Pancreas (tissue), 10 donors: ENCODE measurements at regions of chr5 and their contacts with region 1.

Region 1: DNA sequence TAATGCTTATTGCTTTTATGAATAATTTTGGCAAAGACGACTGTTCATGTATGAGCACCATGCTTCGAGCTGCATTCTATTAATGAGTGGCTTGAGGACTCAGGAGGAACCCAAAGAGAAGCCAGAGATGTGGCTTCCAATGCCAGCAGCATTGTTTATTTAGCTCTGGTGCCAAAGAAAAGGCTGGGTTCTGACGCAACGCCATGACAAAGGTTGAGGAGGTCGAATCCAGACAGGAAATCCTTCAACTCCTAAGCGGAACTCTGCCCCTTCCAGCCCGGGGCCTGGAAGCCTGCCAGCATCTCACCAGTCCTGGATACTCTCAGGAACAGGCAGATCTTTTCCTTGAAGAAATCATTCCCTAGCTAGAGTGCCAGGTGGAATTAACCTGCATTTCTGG is 104.4 kb downstream of the ARHGAP26 start:
- DNase-seq: peak; percentile 90 to 98 (median 97)
- ATAC-seq: peak; percentile 75 to 84 (median 81)
- H3K4me3 ChIP-seq: no peak overlapping the region
- H3K27ac ChIP-seq: peak overlapping the region; percentile 49 to 62 (median 54)
- H3K4me1 ChIP-seq: peaks cover 27 to 66% (median 58%) of the 10 kb centered on the region in 3 donors
- H3K27me3 ChIP-seq: no peaks in the 10 kb centered on the region
- CTCF ChIP-seq: no peak

Region 2: DNA sequence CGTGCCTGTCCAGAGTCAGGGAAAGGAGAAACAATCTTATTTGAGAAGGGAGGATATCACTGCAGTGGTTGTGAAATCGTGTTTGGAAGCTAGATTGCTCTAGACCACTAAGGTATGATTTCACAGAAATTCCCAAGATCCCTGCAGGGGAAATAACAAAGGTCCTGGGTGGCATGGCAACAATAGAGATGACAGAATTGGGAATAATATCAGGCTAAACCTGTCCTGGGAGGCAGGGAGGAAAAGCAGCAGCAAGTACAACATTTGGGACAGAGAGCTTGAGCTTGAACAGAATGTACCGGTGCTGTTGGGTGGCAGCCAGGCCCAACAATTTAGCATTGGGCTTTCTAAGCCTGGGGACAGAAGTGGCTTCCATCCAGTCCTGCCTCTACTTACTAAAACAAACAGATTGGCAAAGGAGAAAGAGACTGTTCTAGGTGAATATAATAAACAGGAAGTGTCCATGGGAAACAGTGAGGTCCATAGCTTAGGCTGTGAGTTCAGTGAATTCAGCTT is 121.4 kb before region 1 on chr5:
- intact Hi-C with region 1: loop called in 1 of 3 experiments (anchors 10 kb)
- DNase-seq: peak in 3 of 6 donors; percentile 17 to 50 (median 43)
- ATAC-seq: peak; percentile 18 to 82 (median 61)
- H3K4me3 ChIP-seq: no peak overlapping the region
- H3K27ac ChIP-seq: peak overlapping the region in 3 of 4 donors; percentile 3 to 50 (median 20)
- H3K4me1 ChIP-seq: peaks cover 0 to 8% (median 0%) of the 10 kb centered on the region in 3 donors
- H3K27me3 ChIP-seq: no peaks in the 10 kb centered on the region
- CTCF ChIP-seq: no peak